ENCODE measurements at regions of chr10 and their contacts with region 1.

Region 1: DNA sequence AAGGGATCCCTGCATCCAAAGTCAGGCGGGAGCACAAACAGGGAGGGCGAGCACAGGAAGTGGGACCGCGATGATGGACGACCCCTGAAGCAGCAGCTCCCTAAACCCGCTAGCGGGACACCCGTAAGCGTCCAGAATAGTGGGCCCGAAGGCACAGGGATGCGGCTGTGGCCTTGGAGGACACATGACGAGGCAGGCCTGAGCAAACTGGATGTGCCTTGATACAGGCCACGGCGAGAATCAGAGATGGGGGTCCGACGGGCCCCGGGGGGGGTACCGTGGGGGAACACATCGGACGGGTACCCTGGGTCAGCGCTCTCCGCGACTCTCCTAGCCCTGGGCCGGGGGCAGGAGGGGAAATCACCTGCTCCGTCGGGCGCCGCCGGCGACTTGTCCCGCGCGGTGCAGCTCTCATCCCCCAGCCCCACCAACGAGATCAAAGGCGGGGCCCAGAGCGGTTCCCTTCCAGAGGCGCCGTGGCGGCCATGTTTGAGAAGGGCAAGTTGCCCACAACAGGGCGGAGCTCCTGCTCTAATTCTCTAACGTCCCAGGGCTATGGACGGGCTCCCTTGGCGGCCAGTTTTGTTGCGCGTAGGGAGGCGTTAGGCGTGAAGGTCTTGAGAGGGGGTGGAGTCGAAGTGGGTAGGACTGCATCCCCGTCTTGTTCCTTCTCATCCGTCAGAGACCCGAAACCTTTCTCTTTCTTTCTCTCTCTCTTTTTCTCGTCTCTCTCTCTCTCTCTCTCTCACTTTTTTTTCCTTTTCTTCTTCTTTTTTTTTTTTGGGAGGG is at the start of gene CUEDC2:
- DNase-seq: peak; percentile 97 to 98
- H3K4me3 ChIP-seq: peak within 1 kb of the TSS; percentile 77
- H3K4me3 Mint-ChIP-seq: peak within 1 kb of the TSS; percentile 73
- H3K27ac Mint-ChIP-seq: peak within 1 kb of the TSS; percentile 65
- H3K4me1 ChIP-seq: peaks cover 11% of the 10 kb centered on the region
- H3K4me1 Mint-ChIP-seq: peaks cover 32% of the 10 kb centered on the region
- H3K27me3 ChIP-seq: no peaks in the 10 kb centered on the region
- H3K27me3 Mint-ChIP-seq: no peaks in the 10 kb centered on the region
- CTCF ChIP-seq: no peak
- total RNA-seq, gene CUEDC2: 32.1 and 32.6 TPM in 2 replicates

Region 2: GRCh38 chr10:102450194-102450938 is 18.0 kb after region 1 on chr10:
- CTCF ChIA-PET with region 1: interaction called, 8 read pairs
- POLR2A ChIA-PET with region 1: interaction called, 21 read pairs
- intact Hi-C with region 1: loop called (anchors 1 kb)
- DNase-seq: peak; percentile 89 to 94
- H3K4me3 ChIP-seq: peak overlapping the region; percentile 84
- H3K4me3 Mint-ChIP-seq: peak overlapping the region; percentile 90
- H3K27ac Mint-ChIP-seq: peak overlapping the region; percentile 90
- H3K4me1 ChIP-seq: peaks cover 39% of the 10 kb centered on the region
- H3K4me1 Mint-ChIP-seq: peaks cover 30% of the 10 kb centered on the region
- H3K27me3 ChIP-seq: no peaks in the 10 kb centered on the region
- H3K27me3 Mint-ChIP-seq: no peaks in the 10 kb centered on the region
- CTCF ChIP-seq: peak in 1 of 2 experiments; percentile 5

Region 3: DNA sequence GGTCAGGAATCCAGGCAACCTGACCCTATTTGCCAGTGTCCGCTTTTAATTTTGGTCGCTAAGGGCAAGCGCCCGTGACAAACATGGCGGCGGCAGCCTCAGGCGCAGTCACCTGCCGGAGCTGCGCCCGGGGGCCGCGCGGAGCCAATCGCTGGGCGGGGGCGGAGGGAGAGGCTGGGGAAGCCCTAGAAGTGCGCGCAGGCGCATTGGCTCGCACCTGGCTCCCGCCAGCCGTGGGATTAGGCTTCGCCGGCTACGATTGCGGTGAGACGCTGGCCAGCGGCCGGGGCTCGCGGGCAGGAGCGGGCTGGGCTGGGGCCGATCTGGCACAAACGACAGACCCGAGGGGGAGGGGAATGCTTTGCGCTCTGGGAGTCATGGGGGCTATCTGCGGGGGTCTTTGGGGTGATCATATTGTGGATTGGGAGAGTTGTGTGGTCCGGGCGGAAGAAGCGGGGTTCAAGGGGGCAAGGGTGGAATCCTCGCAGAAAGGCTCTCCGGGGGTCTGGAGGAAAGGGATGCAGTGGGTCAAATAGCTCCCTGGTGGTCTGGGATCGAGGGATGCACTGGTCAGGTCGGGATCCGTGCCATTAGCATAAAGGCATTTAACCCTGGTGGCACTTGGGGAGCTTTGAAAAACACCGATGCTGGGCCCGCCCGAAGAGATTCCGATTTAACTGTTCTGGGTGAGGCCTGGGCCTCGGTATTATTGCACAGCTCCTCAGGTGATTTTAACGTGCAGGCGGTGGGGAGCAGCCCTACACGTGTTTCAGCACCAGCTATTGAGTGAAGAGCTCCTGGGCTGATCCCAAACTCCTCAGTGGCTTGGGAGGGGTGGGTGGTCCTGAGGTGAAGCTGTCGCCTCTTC is 29.1 kb after region 1 on chr10:
- CTCF ChIA-PET with region 1: interaction called, 6 read pairs
- POLR2A ChIA-PET with region 1: interaction called, 6 read pairs
- intact Hi-C with region 1: loop called (anchors 1 kb)
- DNase-seq: peak; percentile 94 to 98
- H3K4me3 ChIP-seq: peak overlapping the region; percentile 54
- H3K4me3 Mint-ChIP-seq: peak overlapping the region; percentile 96
- H3K27ac Mint-ChIP-seq: peak overlapping the region; percentile 78
- H3K4me1 ChIP-seq: peaks cover 32% of the 10 kb centered on the region
- H3K4me1 Mint-ChIP-seq: peaks cover 24% of the 10 kb centered on the region
- H3K27me3 ChIP-seq: no peaks in the 10 kb centered on the region
- H3K27me3 Mint-ChIP-seq: no peaks in the 10 kb centered on the region
- CTCF ChIP-seq: no peak

Region 4: DNA sequence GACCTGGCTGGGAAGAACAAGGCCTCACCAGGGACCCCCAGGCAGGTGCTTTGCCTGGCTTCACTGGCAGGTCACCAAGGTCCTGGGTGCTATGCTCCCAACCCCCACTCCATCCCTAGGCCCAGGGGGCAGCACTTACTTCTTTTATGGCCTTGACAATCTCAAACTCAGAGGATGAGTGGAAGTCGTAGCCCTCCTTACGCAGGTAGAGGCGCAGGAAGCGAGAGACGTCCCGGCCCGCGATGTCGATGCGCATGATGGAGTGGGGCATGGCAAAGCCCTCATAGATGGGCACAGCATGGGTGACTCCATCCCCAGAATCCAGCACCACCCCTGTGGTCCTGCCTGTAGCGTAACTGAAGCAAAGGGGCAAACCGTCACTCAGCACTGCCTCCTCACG is 51.7 kb after region 1 on chr10:
- CTCF ChIA-PET with region 1: no interaction called
- POLR2A ChIA-PET with region 1: no interaction called
- intact Hi-C with region 1: loop called (anchors 1 kb)
- DNase-seq: no peak
- H3K4me3 ChIP-seq: no peak overlapping the region
- H3K4me3 Mint-ChIP-seq: no peak overlapping the region
- H3K27ac Mint-ChIP-seq: no peak overlapping the region
- H3K4me1 ChIP-seq: no peaks in the 10 kb centered on the region
- H3K4me1 Mint-ChIP-seq: no peaks in the 10 kb centered on the region
- H3K27me3 ChIP-seq: no peaks in the 10 kb centered on the region
- H3K27me3 Mint-ChIP-seq: no peaks in the 10 kb centered on the region
- CTCF ChIP-seq: no peak